Dendritic cell treated with granulocyte-macrophage colony-stimulating factor and Interleukin-4, amounts not matched to agents 40 ng/mL and 50 ng/mL, for 4 days (primary cell): ENCODE measurements at regions of chr17 and their contacts with region 1.

Region 1: DNA sequence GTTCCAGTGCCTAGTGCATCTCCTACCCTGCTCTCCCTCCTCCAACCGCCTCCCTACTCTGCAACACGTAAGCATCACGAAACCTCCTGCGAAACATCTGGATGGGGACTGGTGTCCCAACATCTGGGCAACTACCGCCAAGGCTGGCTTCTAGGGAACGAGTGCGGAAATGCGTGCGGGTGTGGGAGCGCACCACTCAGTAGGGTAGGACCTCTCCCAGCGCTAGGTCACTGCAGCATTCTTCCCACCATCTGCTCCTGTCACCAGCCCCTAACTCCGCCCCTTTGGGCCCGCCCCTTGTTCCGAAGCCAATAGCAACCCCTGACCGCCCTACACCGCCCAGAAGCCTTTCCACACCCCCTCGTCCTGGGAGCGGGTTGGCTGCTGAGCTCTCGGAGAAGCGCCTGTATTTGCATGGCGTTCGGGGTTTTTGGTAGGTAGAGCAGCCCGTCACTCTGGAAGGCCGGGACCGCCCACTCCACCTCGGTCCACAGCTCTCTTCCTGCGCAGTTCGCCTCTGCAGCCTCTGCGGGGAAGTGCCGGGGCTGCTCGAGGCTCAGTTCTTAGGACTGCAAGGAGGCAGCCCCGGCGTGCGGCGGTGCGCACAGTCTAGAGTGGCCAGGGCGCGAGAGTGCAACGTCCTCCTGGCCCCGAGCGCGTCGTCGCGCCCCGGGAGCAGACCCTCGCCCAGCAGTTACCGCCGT is at the start of gene HS3ST3B1:
- H3K4me3 Mint-ChIP-seq: peak within 1 kb of the TSS; percentile 85
- H3K27ac Mint-ChIP-seq: peak within 1 kb of the TSS; percentile 77
- H3K4me1 Mint-ChIP-seq: peaks cover 62% of the 10 kb centered on the region
- H3K27me3 Mint-ChIP-seq: peaks cover 64% of the 10 kb centered on the region

Region 2: DNA sequence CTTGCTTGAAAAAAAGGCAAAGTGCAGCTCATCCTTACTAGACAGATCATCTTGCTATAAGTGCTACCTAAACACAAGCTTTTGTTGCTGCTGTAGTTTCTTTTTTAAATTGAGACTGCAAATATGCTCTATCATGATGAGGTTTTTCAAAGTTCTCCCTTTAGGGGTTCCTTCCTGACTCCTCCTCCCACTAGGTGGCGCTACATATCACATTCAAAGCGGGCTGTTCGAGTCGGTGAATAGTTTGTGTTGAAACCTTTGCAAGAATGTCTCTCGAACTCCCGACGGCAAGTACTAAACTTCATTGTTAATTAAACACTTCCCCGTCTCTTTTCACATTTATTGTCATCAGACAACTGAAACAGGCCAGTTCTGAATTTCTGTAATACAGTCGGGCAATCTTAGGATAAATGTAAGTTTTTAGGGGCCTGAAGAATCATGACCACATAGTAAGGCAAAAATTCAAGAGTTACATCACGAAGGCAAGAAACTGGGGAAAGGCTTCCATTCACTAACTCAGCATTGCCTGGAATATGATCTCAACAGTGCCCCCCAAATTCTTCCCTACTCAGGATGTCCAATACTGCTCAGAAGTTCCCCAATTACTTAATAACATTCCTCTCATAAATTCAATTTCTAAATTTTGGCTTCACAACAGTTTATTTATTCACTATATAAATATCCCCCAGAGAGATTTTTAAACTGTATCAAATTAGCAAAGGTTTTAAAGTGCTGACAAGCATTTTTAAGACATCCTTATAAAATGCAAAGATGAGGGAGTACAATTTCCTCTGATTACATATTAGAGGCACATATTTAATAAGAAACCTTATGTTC is 705.7 kb before region 1 on chr17:
- intact Hi-C with region 1: loop called (anchors 2 kb)
- H3K4me3 Mint-ChIP-seq: no peak overlapping the region
- H3K27ac Mint-ChIP-seq: no peak overlapping the region
- H3K4me1 Mint-ChIP-seq: peaks cover 7% of the 10 kb centered on the region
- H3K27me3 Mint-ChIP-seq: peaks cover 42% of the 10 kb centered on the region

Region 3: GRCh38 chr17:14069251-14070021 is 231.3 kb before region 1 on chr17 and contains the start of gene COX10:
- intact Hi-C with region 1: loop called (anchors 5 kb)
- H3K4me3 Mint-ChIP-seq: peak within 1 kb of the TSS; percentile 99
- H3K27ac Mint-ChIP-seq: peak within 1 kb of the TSS; percentile 99
- H3K4me1 Mint-ChIP-seq: peaks cover 36% of the 10 kb centered on the region
- H3K27me3 Mint-ChIP-seq: no peaks in the 10 kb centered on the region

Region 4: DNA sequence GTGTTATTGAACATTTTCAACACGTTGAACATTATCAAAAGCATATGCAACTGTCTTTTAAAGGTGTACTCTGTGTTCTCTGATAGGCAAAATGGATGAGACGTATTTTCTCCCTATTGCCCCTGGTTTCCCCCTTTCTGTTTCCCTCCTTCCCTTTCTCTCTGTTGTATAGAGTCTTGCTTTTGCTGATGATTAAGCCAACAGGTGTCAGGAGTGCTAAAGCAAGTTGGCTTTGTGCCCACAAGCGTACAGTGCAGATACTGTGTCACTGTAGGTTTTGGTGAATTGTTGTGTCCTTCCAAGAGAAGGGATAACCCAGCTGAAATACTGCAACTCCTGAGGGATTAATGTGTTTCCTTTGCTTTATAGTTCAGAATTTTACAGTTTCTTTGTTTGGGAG is 157.0 kb before region 1 on chr17:
- intact Hi-C with region 1: no loop called
- H3K4me3 Mint-ChIP-seq: no peak overlapping the region
- H3K27ac Mint-ChIP-seq: no peak overlapping the region
- H3K4me1 Mint-ChIP-seq: peaks cover 7% of the 10 kb centered on the region
- H3K27me3 Mint-ChIP-seq: no peaks in the 10 kb centered on the region

Region 5: DNA sequence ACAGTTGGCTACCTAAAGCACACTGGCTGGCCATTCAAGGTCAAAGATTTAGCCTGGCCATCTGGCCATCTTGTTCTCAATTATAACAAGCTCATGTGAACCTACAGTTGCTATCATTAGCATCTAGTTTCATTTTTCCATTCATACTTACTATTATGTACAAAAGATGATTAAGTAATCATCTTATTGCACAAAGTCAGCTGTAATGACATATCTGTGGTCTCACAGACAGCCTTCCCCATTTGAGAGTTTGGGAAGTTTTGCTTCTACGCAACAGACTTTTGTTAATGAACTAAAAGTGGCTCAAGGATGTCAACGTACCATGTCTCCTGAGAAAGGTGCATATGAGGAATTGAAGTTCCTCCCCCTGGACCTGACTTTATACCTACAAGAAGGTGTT is 51.4 kb after region 1 on chr17:
- intact Hi-C with region 1: loop called (anchors 2 kb)
- H3K4me3 Mint-ChIP-seq: no peak overlapping the region
- H3K27ac Mint-ChIP-seq: peak overlapping the region; percentile 66
- H3K4me1 Mint-ChIP-seq: no peaks in the 10 kb centered on the region
- H3K27me3 Mint-ChIP-seq: no peaks in the 10 kb centered on the region

Region 6: GRCh38 chr17:14396547-14396946 is 95.8 kb after region 1 on chr17:
- intact Hi-C with region 1: no loop called
- H3K4me3 Mint-ChIP-seq: no peak overlapping the region
- H3K27ac Mint-ChIP-seq: no peak overlapping the region
- H3K4me1 Mint-ChIP-seq: no peaks in the 10 kb centered on the region
- H3K27me3 Mint-ChIP-seq: no peaks in the 10 kb centered on the region

Region 7: DNA sequence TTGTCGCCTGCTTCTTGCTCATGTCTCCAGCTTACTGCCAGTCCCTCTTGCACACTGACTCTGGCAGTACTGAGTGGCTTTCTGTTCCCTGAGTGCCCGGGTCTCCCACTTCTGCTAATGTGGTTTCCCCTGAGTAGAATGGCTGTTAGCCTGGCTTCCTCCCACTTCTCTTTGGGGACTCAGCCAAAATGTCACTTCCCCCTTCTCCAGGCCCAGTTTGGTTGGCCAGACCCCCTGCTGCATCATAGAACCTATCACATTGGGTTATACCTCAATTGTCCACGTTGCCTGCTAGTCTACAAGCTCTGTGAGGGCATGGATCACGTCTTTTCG is 304.5 kb after region 1 on chr17:
- intact Hi-C with region 1: loop called (anchors 2 kb)
- H3K4me3 Mint-ChIP-seq: peak overlapping the region; percentile 66
- H3K27ac Mint-ChIP-seq: peak overlapping the region; percentile 98
- H3K4me1 Mint-ChIP-seq: peaks cover 36% of the 10 kb centered on the region
- H3K27me3 Mint-ChIP-seq: no peaks in the 10 kb centered on the region

Region 8: GRCh38 chr17:14813649-14814365 is 513.1 kb after region 1 on chr17:
- intact Hi-C with region 1: loop called (anchors 10 kb)
- H3K4me3 Mint-ChIP-seq: no peak overlapping the region
- H3K27ac Mint-ChIP-seq: no peak overlapping the region
- H3K4me1 Mint-ChIP-seq: peaks cover 6% of the 10 kb centered on the region
- H3K27me3 Mint-ChIP-seq: no peaks in the 10 kb centered on the region